ENCODE measurements at regions of chr1 and their contacts with region 1.

Region 1: DNA sequence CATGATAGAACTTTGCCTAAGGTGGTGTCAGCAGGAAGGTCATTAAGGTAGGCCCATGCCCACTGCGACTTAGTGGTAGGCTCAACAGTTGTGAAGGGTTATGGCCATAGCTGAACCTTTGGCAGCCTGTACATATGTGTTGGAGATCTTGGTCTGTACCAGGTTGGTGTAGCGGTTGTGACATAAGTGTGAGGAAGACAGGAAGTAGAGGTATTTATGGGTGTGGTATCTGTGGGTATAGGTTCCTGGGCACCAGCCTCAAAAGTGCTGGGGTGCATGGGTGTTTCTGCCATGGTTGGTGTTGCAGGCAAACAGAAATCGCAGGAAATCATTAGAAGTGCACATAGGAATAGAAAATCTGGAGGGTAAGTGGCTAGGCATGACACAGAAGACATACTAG is 18.6 kb upstream of the LRIF1 start:
- DNase-seq: no peak
- CTCF ChIP-seq: no peak

Region 2: DNA sequence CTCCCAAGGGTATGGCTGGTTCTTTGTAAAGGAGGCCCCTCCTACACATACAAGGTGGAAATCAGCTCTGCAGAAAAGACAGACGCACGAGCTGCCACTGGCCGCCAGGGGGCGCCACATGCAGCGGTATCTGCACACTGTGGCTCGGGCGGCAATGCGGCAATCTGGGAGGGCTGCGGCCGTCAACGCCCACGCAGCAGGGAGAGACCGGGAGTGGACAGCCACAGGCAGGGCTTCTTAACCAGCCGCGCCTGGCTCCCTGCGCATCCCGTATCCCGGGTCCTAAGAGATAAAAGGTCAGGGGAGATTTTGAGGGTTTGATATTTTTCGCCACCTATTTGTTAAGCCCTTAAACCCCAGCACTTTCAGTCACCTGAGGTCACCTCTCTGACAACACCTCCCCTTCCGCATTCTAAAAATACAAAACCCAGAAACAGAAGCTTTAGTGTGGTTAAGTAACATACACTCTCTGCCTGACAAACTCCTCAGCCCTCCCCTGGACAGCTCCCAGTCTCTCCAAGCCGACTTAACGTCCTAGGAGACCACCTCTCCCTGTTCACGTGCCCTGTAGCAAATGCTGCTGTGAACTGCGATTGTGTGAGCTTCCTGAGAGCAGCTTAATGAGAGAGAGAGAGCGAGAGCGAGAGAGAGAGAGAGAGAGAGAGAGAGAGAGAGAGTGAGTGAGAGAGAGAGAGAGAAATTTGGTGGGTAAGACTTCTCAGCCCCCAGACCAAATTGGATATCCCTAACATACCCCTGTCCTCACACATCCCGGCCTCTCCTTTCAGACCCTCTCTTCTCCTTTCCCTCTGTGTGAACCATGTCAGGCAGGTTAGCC is 362.7 kb before region 1 on chr1:
- in situ Hi-C with region 1: loop called (anchors 10 kb)
- DNase-seq: peak; percentile 87
- CTCF ChIP-seq: peak; percentile 94

Region 3: DNA sequence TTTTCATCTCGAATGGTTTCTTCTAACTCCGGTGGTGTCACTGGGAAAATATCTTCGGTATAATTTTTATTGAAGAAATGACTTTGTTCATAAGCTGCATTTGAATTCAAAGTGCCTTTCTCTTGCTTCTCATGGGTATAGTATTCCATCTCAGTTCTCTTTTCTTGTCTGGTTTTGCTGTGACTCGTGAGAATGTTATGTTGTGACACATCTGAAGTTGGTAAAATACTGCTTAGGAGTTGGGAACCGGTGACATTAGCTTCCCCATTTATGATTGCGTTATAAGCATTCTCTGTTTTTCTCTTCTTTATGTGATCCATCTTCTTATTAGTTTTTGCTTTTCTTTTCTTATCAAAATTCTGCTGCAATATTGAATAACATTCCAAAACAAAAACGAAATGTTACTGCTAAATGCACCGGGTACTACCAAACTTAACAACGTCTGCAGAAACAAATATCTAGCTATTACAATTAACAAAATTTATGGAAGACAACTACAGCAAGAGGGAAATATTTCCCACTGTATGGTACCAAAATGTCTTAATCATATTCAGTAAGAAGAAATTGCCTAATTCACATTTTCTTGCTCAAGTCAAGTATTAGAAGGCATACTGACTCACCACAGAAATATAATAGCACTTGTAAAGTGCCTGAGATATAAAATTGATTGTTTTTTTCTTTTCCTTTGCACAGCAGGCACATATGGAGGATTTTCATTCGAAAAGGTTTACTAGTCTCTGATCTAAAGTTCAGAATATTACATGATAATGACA is 34.1 kb before region 1 on chr1:
- in situ Hi-C with region 1: no loop called
- DNase-seq: no peak
- CTCF ChIP-seq: no peak

Region 4: DNA sequence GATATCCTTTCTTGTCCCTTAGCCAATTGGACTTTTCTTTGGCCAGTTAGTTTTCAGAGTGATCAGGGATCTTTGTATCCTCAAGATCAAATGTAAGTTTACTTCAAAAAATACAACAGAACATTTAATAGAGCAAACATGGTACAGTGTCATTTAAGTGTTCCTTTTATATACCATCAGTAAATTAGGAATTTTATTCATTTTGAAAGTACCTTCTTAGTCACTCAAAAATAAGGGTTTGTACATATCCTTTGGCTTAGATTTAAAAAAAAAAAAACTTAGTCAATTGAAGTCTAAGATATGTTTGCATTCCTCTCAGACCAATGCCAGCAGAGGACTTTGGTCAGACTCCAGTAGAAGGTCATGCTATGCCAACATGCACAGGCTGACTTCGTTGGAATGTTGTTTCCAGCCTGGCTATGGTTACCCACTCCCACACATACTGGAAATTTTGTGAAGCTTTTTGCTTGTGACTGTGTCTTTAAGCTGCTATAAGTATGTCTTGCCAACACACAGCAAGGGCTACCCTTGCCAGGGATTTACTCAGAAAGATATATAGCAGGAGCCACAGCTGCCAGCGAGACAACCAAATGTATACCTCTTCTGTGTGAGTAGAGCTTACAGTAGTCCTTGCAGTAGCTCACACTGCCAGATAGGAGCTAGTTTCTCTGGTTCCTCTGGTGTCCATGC is 62.9 kb after region 1 on chr1:
- in situ Hi-C with region 1: no loop called
- DNase-seq: no peak
- CTCF ChIP-seq: no peak

Region 5: GRCh38 chr1:111116496-111116895 is 134.2 kb after region 1 on chr1:
- in situ Hi-C with region 1: no loop called
- DNase-seq: no peak
- CTCF ChIP-seq: no peak